ENCODE measurements at regions of chr17 and their contacts with region 1.

Region 1: GRCh38 chr17:31877911-31878702 is 19.1 kb upstream of the COPRS start:
- DNase-seq: no peak
- ATAC-seq: no peak
- H3K4me3 ChIP-seq: no peak overlapping the region
- H3K27ac ChIP-seq: no peak overlapping the region
- H3K4me1 ChIP-seq: no peaks in the 10 kb centered on the region
- H3K27me3 ChIP-seq: no peaks in the 10 kb centered on the region
- CTCF ChIP-seq: no peak
- POLR2A ChIP-seq: no peak
- RAD21 ChIP-seq: no peak

Region 2: GRCh38 chr17:31524926-31525800 is 352.9 kb before region 1 on chr17:
- CTCF ChIA-PET with region 1: no interaction called
- POLR2A ChIA-PET with region 1: no interaction called
- RAD21 ChIA-PET with region 1: no interaction called
- intact Hi-C with region 1: no loop called
- DNase-seq: peak; percentile 49
- ATAC-seq: peak; percentile 95
- H3K4me3 ChIP-seq: no peak overlapping the region
- H3K27ac ChIP-seq: no peak overlapping the region
- H3K4me1 ChIP-seq: peaks cover 0 to 10% of the 10 kb centered on the region in 2 experiments; a peak in 2 of 4 replicates
- H3K27me3 ChIP-seq: no peaks in the 10 kb centered on the region
- CTCF ChIP-seq: peak; percentile 94 to 98 (median 96)
- POLR2A ChIP-seq: no peak
- RAD21 ChIP-seq: peak; percentile 95

Region 3: GRCh38 chr17:31931756-31932155 is 53.6 kb after region 1 on chr17:
- CTCF ChIA-PET with region 1: no interaction called
- POLR2A ChIA-PET with region 1: no interaction called
- RAD21 ChIA-PET with region 1: no interaction called
- intact Hi-C with region 1: loop called (anchors 10 kb)
- DNase-seq: no peak
- ATAC-seq: no peak
- H3K4me3 ChIP-seq: no peak overlapping the region
- H3K27ac ChIP-seq: no peak overlapping the region
- H3K4me1 ChIP-seq: peaks cover 0 to 8% of the 10 kb centered on the region in 2 experiments; a peak in 2 of 4 replicates
- H3K27me3 ChIP-seq: no peaks in the 10 kb centered on the region
- CTCF ChIP-seq: no peak
- POLR2A ChIP-seq: no peak
- RAD21 ChIP-seq: no peak

Measured in HCT116 (cell line).